ENCODE measurements at regions of chr12 and their contacts with region 1.

Region 1: DNA sequence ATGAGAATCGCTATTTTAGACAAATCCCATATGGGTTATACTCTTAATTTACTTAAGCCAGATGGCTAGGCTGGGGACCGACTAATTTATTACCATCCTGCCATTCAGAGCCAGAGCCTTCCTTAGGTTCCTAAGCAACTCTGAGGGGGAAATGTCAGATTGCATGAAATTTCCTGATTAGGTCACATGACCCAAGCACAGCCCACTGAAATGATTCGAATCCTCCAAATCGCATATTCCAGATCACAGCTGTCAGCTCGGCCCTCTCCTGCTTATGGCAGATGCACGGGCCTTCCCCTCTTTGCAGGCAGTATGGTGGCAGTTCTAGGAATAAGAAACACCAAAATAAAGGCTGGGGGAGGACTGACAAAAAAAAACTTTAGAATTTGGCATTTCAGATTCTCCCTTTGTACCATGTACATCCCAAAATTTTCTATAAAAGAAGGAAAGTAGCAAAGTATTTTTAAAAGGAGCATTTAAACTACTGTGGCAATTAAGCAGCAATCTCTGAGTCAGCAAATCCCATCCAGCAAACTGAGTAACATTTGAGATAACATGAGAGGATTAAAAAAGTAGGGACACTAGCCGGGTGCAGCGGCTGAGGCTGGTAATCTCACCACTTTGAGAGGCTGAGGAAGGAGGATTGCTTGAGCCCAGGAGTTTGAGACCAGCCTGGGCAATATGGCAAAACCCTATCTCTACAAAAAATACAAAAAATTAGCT is 30.5 kb upstream of the NUDT4 start:
- DNase-seq: no peak
- H3K27ac ChIP-seq: no peak overlapping the region
- CTCF ChIP-seq: no peak

Region 2: DNA sequence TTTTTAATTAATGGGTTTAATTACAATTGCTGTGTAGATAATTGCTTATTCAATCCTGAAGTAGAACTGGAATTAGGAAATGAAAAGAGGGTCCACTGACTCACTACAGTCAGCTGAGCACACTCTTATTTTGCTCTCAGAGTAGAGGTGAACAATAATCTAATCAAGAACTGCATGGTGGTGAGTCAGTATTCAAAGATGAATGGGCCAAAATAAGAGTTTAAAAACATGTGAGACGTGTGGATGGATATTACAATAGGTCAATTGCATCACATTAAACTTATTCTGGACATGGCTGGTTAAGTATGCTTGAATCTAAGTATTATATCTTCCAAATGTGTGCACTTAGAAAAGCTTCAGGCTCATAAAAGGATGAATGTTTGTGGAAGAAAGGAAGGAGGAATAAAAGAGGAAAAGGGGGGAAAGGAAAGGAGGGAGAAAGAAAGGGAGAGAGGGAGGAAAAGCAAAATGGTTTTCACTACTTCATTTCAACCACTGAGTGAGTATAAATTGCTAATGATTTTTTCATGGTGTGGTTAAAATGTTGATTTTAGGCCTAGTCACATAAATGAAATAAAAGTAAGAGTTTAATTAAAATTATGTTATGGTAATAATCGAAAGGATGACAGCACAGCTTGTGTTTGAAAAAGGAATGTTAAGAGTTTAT is 391.1 kb before region 1 on chr12:
- CTCF ChIA-PET with region 1: interaction called, 12 read pairs
- POLR2A ChIA-PET with region 1: no interaction called
- DNase-seq: no peak
- H3K27ac ChIP-seq: no peak overlapping the region
- CTCF ChIP-seq: no peak

Region 3: GRCh38 chr12:93361151-93361919 is 14.1 kb after region 1 on chr12:
- CTCF ChIA-PET with region 1: no interaction called
- POLR2A ChIA-PET with region 1: no interaction called
- DNase-seq: no peak
- H3K27ac ChIP-seq: no peak overlapping the region
- CTCF ChIP-seq: no peak

Measured in RWPE1 (cell line).